B cell (primary cell): ENCODE measurements at regions of chr20 and their contacts with region 1.

Region 1: DNA sequence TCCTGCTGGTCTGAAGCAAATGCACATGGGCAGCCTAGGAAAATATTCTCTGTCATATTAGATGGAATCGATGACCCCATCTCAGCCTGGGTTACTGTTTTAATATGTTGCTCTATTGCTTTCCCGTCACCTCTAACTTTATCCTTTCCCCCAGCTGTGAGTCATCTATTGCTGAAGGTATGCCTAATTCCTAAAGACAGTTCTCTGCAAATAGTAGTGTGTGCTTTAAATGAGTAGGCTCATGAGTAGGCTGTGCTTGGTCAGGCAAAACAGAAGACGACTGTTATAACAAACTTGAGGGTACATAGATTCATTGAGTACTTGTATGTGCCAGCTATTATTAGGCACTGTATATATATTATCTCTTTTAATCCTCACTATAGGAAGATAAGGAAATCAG is 47.2 kb downstream of the CTNNBL1 start:
- DNase-seq: no peak
- ATAC-seq: no peak
- H3K4me3 ChIP-seq: no peak overlapping the region
- H3K4me3 Mint-ChIP-seq: no peak overlapping the region
- H3K27ac ChIP-seq: no peak overlapping the region
- H3K27ac Mint-ChIP-seq: no peak overlapping the region
- H3K4me1 ChIP-seq: peaks cover 0 to 3% of the 10 kb centered on the region in 2 donors
- H3K4me1 Mint-ChIP-seq: peaks cover 24% of the 10 kb centered on the region
- H3K27me3 ChIP-seq: no peaks in the 10 kb centered on the region
- H3K27me3 Mint-ChIP-seq: no peaks in the 10 kb centered on the region
- CTCF ChIP-seq: no peak

Region 2: GRCh38 chr20:37020636-37021035 is 720.4 kb before region 1 on chr20:
- CTCF ChIA-PET with region 1: no interaction called
- POLR2A ChIA-PET with region 1: no interaction called
- intact Hi-C with region 1: no loop called
- DNase-seq: no peak
- ATAC-seq: no peak
- H3K4me3 ChIP-seq: no peak overlapping the region
- H3K4me3 Mint-ChIP-seq: no peak overlapping the region
- H3K27ac ChIP-seq: no peak overlapping the region
- H3K27ac Mint-ChIP-seq: no peak overlapping the region
- H3K4me1 ChIP-seq: no peaks in the 10 kb centered on the region
- H3K4me1 Mint-ChIP-seq: no peaks in the 10 kb centered on the region
- H3K27me3 ChIP-seq: no peaks in the 10 kb centered on the region
- H3K27me3 Mint-ChIP-seq: no peaks in the 10 kb centered on the region
- CTCF ChIP-seq: no peak

Region 3: DNA sequence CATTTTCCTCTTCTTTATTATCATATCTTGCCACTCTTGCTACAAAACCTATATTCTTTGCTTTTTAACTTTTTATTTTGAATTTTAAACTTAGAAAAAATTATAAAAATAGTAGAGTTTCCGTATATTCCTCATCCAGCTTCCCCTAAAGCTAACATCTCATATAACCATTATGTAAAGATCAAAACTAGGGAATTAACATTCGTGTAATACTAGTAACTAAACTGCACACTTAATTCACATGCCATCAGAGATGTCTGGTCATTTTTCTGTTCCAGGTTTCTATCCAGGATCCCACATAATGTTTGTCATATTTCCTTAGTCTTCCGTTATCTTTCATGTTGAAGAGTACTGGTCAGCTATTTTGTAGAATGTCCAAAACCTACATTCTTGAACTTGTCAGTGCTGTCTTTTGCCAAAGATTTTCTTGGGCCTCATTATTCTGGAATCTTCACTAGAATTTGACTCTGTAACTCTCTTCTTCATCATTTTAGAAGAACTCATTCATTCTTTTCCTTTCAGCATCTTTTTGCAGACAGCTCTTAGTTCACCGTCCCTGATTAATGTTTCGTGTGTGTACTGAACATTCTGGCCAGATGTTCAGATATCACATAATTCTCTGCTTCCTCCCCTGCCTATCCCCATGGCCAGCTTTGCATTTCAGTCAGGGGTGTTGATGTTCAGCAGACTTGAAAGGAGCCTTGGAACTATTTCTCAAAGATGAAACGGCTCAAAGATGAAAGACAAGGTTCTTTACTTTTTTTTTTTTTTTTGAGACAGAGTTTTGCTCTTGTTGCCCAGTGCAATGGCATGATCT is 37.8 kb before region 1 on chr20:
- CTCF ChIA-PET with region 1: no interaction called
- POLR2A ChIA-PET with region 1: no interaction called
- intact Hi-C with region 1: no loop called
- DNase-seq: no peak
- ATAC-seq: no peak
- H3K4me3 ChIP-seq: no peak overlapping the region
- H3K4me3 Mint-ChIP-seq: no peak overlapping the region
- H3K27ac ChIP-seq: no peak overlapping the region
- H3K27ac Mint-ChIP-seq: no peak overlapping the region
- H3K4me1 ChIP-seq: peaks cover 0 to 2% of the 10 kb centered on the region in 2 donors
- H3K4me1 Mint-ChIP-seq: peaks cover 26% of the 10 kb centered on the region
- H3K27me3 ChIP-seq: no peaks in the 10 kb centered on the region
- H3K27me3 Mint-ChIP-seq: no peaks in the 10 kb centered on the region
- CTCF ChIP-seq: no peak

Region 4: DNA sequence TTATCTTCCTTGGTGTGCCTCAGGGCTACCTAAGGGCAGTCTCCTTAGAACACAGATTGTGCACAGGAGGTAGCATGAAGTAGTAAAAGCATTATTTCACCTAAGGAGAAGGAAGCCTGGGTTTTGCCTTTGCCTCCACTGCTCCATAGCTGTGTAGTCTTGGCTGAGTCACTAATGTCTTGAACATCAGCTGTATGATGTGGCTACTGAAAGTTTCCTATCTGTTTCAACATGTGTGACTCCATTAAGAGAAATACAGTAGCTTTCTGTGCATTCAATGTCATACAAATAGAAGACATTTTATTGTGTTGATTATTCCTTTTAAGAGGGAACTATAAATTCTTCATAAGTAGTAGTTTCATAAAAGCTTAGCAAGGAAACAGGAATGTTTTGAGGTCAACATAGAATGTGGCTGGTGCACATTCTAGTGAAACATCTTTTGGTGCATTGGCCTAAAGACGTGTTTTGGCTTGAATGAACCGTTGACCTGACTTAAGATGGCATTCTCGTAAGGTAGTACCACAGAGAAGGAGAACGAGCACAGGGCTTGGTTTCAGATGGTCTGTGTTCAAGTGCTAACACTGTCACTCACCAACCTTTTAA is 23.4 kb after region 1 on chr20:
- CTCF ChIA-PET with region 1: no interaction called
- POLR2A ChIA-PET with region 1: no interaction called
- intact Hi-C with region 1: loop called (anchors 1 kb)
- DNase-seq: no peak
- ATAC-seq: no peak
- H3K4me3 ChIP-seq: no peak overlapping the region
- H3K4me3 Mint-ChIP-seq: no peak overlapping the region
- H3K27ac ChIP-seq: no peak overlapping the region
- H3K27ac Mint-ChIP-seq: no peak overlapping the region
- H3K4me1 ChIP-seq: no peaks in the 10 kb centered on the region
- H3K4me1 Mint-ChIP-seq: no peaks in the 10 kb centered on the region
- H3K27me3 ChIP-seq: no peaks in the 10 kb centered on the region
- H3K27me3 Mint-ChIP-seq: no peaks in the 10 kb centered on the region
- CTCF ChIP-seq: no peak